ENCODE measurements at regions of chr12 and their contacts with region 1.

Region 1: GRCh38 chr12:131345521-131346436 is 365.1 kb upstream of the SFSWAP start:
- DNase-seq: no peak
- H3K4me3 ChIP-seq: no peak overlapping the region
- H3K27ac ChIP-seq: no peak overlapping the region
- H3K4me1 ChIP-seq: no peaks in the 10 kb centered on the region
- H3K27me3 ChIP-seq: no peaks in the 10 kb centered on the region
- CTCF ChIP-seq: no peak
- POLR2A ChIP-seq: no peak

Region 2: DNA sequence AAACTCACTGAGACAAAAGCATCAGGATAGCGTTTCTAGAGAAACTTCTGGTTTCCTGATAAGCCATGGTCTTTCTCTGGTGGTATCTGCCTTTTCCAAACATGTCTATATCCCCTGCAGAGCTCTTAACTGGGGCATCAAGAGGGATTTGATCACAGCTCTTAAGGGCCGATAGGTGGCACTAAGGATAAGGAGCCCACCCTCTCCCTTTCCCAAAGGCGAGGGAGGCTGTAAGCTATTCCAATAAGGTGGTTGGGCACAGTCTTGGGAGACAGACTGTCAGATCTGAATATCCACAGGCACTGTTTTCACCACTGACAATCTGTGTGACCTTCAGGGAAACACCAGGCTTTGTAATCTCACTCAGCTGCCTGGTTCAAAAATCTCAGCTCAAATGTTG is 186.1 kb before region 1 on chr12:
- intact Hi-C with region 1: no loop called
- DNase-seq: no peak
- H3K4me3 ChIP-seq: no peak overlapping the region
- H3K27ac ChIP-seq: no peak overlapping the region
- H3K4me1 ChIP-seq: no peaks in the 10 kb centered on the region
- H3K27me3 ChIP-seq: no peaks in the 10 kb centered on the region
- CTCF ChIP-seq: peak in 1 of 6 experiments; percentile 18
- POLR2A ChIP-seq: no peak

Region 3: GRCh38 chr12:131390384-131391334 is 44.9 kb after region 1 on chr12:
- intact Hi-C with region 1: no loop called
- DNase-seq: peak; percentile 37 to 62
- H3K4me3 ChIP-seq: no peak overlapping the region
- H3K27ac ChIP-seq: no peak overlapping the region
- H3K4me1 ChIP-seq: no peaks in the 10 kb centered on the region
- H3K27me3 ChIP-seq: no peaks in the 10 kb centered on the region
- CTCF ChIP-seq: no peak
- POLR2A ChIP-seq: no peak

Region 4: GRCh38 chr12:131621701-131622421 is 276.1 kb after region 1 on chr12:
- intact Hi-C with region 1: loop called (anchors 5 kb)
- DNase-seq: no peak
- H3K4me3 ChIP-seq: no peak overlapping the region
- H3K27ac ChIP-seq: no peak overlapping the region
- H3K4me1 ChIP-seq: no peaks in the 10 kb centered on the region
- H3K27me3 ChIP-seq: no peaks in the 10 kb centered on the region
- CTCF ChIP-seq: no peak
- POLR2A ChIP-seq: no peak

Measured in thyroid gland (tissue), 4 donors.